ENCODE measurements at regions of chr11 and their contacts with region 1.

Region 1: DNA sequence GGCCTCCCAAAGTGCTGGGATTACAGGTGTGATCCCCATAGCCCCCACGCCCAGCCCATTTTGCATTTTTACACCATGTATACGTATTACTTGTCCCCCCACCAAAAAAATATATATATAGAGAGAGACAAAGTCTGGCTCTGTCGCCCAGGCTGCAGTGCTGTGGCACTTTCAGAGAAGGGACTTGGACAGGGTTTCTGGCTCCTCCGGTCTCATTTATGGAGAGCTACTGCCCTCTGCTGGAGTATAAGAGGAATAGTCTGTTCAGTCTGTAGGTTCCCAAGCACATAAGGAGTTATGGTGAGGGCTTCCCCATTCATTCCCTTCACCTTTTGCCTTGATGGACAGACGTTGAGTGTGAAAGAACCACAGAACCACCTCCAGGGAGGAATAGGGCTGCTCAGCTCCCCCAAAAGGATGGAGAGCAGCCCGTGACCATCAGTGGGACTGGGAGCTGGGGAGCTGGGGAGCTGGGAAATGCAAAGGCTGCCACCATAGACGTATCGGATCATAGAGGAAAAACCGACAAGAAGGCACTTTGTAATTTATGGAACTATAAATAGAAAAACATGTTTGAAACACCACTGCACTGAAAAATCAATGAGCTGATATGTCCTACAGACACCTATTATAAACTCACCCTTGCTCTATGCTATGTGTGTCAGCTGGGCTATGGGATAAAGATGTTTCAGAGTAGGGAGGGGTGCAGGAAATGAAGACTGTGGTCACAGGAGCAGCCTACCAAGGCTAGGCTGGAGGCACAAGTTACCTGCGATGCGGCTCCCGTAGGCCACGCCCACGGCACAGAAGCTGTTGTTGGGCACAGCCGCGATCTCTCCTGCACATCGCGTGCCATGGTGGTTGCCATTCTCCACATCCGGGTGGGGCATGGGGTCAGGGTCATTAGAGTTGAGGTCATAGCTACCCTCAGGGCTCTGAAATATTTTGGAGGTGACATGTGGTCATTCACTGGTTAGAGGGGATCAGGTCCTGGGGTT is 5.2 kb downstream of the PCSK7 start:
- DNase-seq: peak in 10 of 14 experiments; percentile 17 to 86 (median 40)
- ATAC-seq: peak; percentile 69
- H3K4me3 ChIP-seq: no peak overlapping the region
- H3K4me3 Mint-ChIP-seq: peak overlapping the region; percentile 62
- H3K27ac ChIP-seq: no peak overlapping the region
- H3K27ac Mint-ChIP-seq: peak overlapping the region; percentile 78
- H3K4me1 ChIP-seq: peaks cover 50% of the 10 kb centered on the region
- H3K4me1 Mint-ChIP-seq: peaks cover 48% of the 10 kb centered on the region
- H3K27me3 ChIP-seq: no peaks in the 10 kb centered on the region
- H3K27me3 Mint-ChIP-seq: no peaks in the 10 kb centered on the region
- CTCF ChIP-seq: peak; percentile 82

Region 2: GRCh38 chr11:116732271-116733042 is 494.2 kb before region 1 on chr11:
- CTCF ChIA-PET with region 1: interaction called, 11 read pairs
- POLR2A ChIA-PET with region 1: no interaction called
- intact Hi-C with region 1: loop called (anchors 1 to 5 kb)
- DNase-seq: peak; percentile 33 to 76 (median 45)
- ATAC-seq: peak; percentile 95
- H3K4me3 ChIP-seq: no peak overlapping the region
- H3K4me3 Mint-ChIP-seq: no peak overlapping the region
- H3K27ac ChIP-seq: no peak overlapping the region
- H3K27ac Mint-ChIP-seq: no peak overlapping the region
- H3K4me1 ChIP-seq: peaks cover 7% of the 10 kb centered on the region
- H3K4me1 Mint-ChIP-seq: peaks cover 7% of the 10 kb centered on the region
- H3K27me3 ChIP-seq: peaks cover 0 to 2% of the 10 kb centered on the region in 2 experiments
- H3K27me3 Mint-ChIP-seq: no peaks in the 10 kb centered on the region
- CTCF ChIP-seq: peak; percentile 83

Region 3: GRCh38 chr11:116879800-116880625 is 346.7 kb before region 1 on chr11:
- CTCF ChIA-PET with region 1: interaction called, 4 read pairs
- POLR2A ChIA-PET with region 1: no interaction called
- intact Hi-C with region 1: loop called (anchors 1 to 5 kb)
- DNase-seq: peak in 4 of 14 experiments; percentile 20 to 78 (median 71)
- ATAC-seq: peak; percentile 83
- H3K4me3 ChIP-seq: no peak overlapping the region
- H3K4me3 Mint-ChIP-seq: no peak overlapping the region
- H3K27ac ChIP-seq: no peak overlapping the region
- H3K27ac Mint-ChIP-seq: no peak overlapping the region
- H3K4me1 ChIP-seq: no peaks in the 10 kb centered on the region
- H3K4me1 Mint-ChIP-seq: peaks cover 15% of the 10 kb centered on the region
- H3K27me3 ChIP-seq: no peaks in the 10 kb centered on the region
- H3K27me3 Mint-ChIP-seq: no peaks in the 10 kb centered on the region
- CTCF ChIP-seq: peak; percentile 80

Region 4: GRCh38 chr11:117098269-117099232 is 128.1 kb before region 1 on chr11 and contains the start of gene SIK3:
- CTCF ChIA-PET with region 1: no interaction called
- POLR2A ChIA-PET with region 1: interaction called, 4 read pairs
- intact Hi-C with region 1: loop called in 1 of 2 experiments (anchors 5 kb)
- DNase-seq: peak; percentile 90 to 98 (median 93)
- ATAC-seq: peak; percentile 69
- H3K4me3 ChIP-seq: peak within 1 kb of the TSS; percentile 89
- H3K4me3 Mint-ChIP-seq: peak within 1 kb of the TSS; percentile 100
- H3K27ac ChIP-seq: peak within 1 kb of the TSS; percentile 81 to 95
- H3K27ac Mint-ChIP-seq: peak within 1 kb of the TSS; percentile 100
- H3K4me1 ChIP-seq: peaks cover 38% of the 10 kb centered on the region
- H3K4me1 Mint-ChIP-seq: peaks cover 51% of the 10 kb centered on the region
- H3K27me3 ChIP-seq: no peaks in the 10 kb centered on the region
- H3K27me3 Mint-ChIP-seq: no peaks in the 10 kb centered on the region
- CTCF ChIP-seq: peak; percentile 67
- total RNA-seq, gene SIK3: 81.4 to 86.1 TPM

Region 5: GRCh38 chr11:117107701-117108590 is 118.7 kb before region 1 on chr11:
- CTCF ChIA-PET with region 1: interaction called, 7 read pairs
- POLR2A ChIA-PET with region 1: no interaction called
- intact Hi-C with region 1: loop called (anchors 2 to 5 kb)
- DNase-seq: no peak
- ATAC-seq: no peak
- H3K4me3 ChIP-seq: no peak overlapping the region
- H3K4me3 Mint-ChIP-seq: no peak overlapping the region
- H3K27ac ChIP-seq: no peak overlapping the region
- H3K27ac Mint-ChIP-seq: no peak overlapping the region
- H3K4me1 ChIP-seq: peaks cover 6% of the 10 kb centered on the region
- H3K4me1 Mint-ChIP-seq: no peaks in the 10 kb centered on the region
- H3K27me3 ChIP-seq: no peaks in the 10 kb centered on the region
- H3K27me3 Mint-ChIP-seq: no peaks in the 10 kb centered on the region
- CTCF ChIP-seq: no peak

Region 6: DNA sequence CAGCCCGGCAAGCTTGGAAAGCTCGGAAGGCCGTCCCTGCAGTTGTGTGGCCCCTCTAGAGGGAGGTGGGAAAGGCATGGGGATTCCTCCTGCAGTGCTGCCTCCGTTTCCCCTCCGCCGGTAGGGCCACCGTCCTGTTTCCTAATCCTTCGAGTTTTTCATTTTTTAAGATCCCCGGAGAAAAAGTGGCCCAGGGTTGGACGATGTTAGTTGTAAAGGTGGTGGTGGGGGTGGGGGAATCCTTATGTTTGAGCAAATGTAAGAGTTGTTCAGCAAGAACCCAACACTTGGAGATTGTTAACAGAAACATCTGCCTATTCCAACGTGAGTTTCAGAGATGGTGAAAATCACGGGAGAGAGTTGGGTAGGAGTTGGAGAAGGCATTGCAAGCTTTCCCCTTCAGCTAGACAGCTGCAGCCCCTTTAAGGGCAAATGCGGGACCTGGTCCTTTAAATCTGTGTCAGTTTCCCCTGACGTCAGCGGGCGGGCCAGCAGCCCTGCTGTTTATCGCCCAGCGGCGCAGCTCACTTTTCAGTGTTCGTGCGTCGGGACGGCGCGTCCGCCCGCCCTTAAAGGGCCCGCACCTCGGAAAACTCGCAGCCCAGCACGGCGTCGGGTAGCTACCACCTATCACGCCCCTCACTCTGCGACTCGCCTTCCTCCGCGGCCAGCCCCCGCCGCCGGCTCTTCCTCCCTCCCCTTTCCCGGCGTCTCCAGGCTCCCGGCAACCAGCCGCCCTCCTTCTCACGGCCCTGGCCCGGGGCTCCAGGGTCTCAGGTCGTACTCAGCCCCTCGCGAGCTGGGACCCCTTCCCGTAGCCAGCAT is 48.3 kb before region 1 on chr11 and contains the start of gene SIDT2:
- CTCF ChIA-PET with region 1: interaction called, 11 read pairs
- POLR2A ChIA-PET with region 1: interaction called, 46 read pairs
- intact Hi-C with region 1: loop called in 1 of 2 experiments (anchors 1 kb)
- DNase-seq: peak; percentile 77 to 94 (median 86)
- ATAC-seq: peak; percentile 89
- H3K4me3 ChIP-seq: peak within 1 kb of the TSS; percentile 81
- H3K4me3 Mint-ChIP-seq: peak within 1 kb of the TSS; percentile 99
- H3K27ac ChIP-seq: peak within 1 kb of the TSS; percentile 34 to 52
- H3K27ac Mint-ChIP-seq: peak within 1 kb of the TSS; percentile 98
- H3K4me1 ChIP-seq: peaks cover 32% of the 10 kb centered on the region
- H3K4me1 Mint-ChIP-seq: peaks cover 40% of the 10 kb centered on the region
- H3K27me3 ChIP-seq: no peaks in the 10 kb centered on the region
- H3K27me3 Mint-ChIP-seq: no peaks in the 10 kb centered on the region
- CTCF ChIP-seq: no peak
- total RNA-seq, gene SIDT2: 197 to 200 TPM